Mammary epithelial cell (primary cell): ENCODE measurements at regions of chr10 and their contacts with region 1.

Region 1: DNA sequence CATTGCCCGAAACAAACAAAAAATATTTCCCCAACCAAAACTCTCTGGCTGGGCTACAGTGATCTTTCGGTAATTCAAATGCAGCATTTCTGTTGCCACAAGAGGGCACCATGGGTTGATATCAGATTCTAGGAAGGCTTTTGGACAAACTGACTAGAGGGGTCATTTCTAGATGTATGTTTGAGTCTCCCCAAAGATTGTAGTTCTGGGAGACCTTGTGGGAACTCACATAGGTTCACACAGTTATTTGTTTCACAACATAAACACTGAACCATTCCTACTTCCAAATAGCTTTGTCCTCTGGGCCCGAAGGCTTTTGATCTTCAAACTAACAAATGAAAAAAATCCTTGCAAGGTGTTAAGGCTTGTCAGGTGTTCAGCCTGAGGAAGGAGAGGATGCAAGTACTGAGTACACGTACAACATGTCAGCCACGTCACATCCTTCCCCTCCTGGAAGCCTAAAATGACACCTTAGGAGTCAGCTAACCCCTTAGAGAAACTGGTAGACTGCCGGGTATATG is 37.0 kb upstream of the IL15RA start:
- DNase-seq: peak; percentile 32
- H3K4me3 ChIP-seq: no peak overlapping the region
- H3K27ac ChIP-seq: no peak overlapping the region
- H3K4me1 ChIP-seq: no peaks in the 10 kb centered on the region
- H3K27me3 ChIP-seq: no peaks in the 10 kb centered on the region
- CTCF ChIP-seq: peak; percentile 65 to 72

Region 2: DNA sequence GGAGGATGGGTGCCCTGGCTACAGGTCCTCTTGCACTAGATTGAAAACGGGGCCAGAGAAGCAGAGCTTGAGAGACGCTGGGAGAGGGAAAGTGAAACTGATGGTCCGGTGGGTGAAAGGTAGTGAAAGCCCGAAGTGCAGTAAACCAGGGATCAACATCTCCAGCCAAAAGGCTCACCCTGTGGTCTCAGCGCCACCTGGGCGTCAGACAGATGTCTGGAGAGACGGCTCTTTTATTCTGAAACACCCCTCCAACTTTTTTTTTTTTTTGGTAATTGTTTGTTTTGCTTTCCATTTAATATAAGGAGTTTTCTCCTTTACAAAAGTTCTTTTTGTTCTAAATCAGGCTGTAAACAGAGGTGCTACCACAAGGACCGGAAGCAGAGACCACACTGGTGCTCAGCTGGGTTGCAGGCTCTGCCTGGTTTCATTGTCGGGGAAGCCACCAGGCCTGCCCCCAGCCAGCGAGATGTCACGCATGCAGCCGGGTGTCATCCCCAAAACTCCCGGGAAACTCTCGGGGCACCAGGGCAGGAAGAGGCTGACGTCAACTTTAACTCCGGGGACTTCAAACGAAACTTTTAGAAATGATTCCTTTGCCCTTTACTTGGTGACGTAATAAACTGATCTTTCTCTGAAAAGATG is 36.6 kb after region 1 on chr10:
- CTCF ChIA-PET with region 1: no interaction called
- dilution Hi-C with region 1: no loop called
- in situ Hi-C with region 1: no loop called
- intact Hi-C with region 1: loop called (anchors 2 kb)
- DNase-seq: peak; percentile 44
- H3K4me3 ChIP-seq: peak overlapping the region; percentile 27 to 31 (median 31)
- H3K27ac ChIP-seq: no peak overlapping the region
- H3K4me1 ChIP-seq: peaks cover 19% of the 10 kb centered on the region
- H3K27me3 ChIP-seq: peaks cover 4% of the 10 kb centered on the region
- CTCF ChIP-seq: peak in 1 of 2 donors; percentile 47

Region 3: GRCh38 chr10:6088721-6089390 is 74.6 kb after region 1 on chr10 and contains the start of gene RBM17:
- CTCF ChIA-PET with region 1: no interaction called
- dilution Hi-C with region 1: no loop called
- in situ Hi-C with region 1: no loop called
- intact Hi-C with region 1: loop called (anchors 2 kb)
- DNase-seq: peak; percentile 89
- H3K4me3 ChIP-seq: peak within 1 kb of the TSS; percentile 74 to 77 (median 76)
- H3K27ac ChIP-seq: peak within 1 kb of the TSS; percentile 82
- H3K4me1 ChIP-seq: peaks cover 15% of the 10 kb centered on the region
- H3K27me3 ChIP-seq: peaks cover 2% of the 10 kb centered on the region
- CTCF ChIP-seq: peak; percentile 100
- total RNA-seq, gene RBM17: 31.5 to 120 TPM